ENCODE measurements at regions of chr2 and their contacts with region 1.

Region 1: GRCh38 chr2:66434679-66435548 is at the start of gene MEIS1:
- DNase-seq: peak in 1 of 2 donors; percentile 99
- H3K4me3 ChIP-seq: peak within 1 kb of the TSS; percentile 72 to 77
- H3K27ac ChIP-seq: peak within 1 kb of the TSS; percentile 98
- H3K4me1 ChIP-seq: peaks cover 6% of the 10 kb centered on the region
- H3K27me3 ChIP-seq: no peaks in the 10 kb centered on the region
- CTCF ChIP-seq: peak in 1 of 3 experiments; percentile 15
- POLR2A ChIP-seq: peak in 1 of 2 donors; percentile 96
- total RNA-seq, gene MEIS1: 80.5 TPM

Region 2: GRCh38 chr2:65722028-65722778 is 712.7 kb before region 1 on chr2:
- intact Hi-C with region 1: no loop called
- DNase-seq: no peak
- H3K4me3 ChIP-seq: no peak overlapping the region
- H3K27ac ChIP-seq: no peak overlapping the region
- H3K4me1 ChIP-seq: no peaks in the 10 kb centered on the region
- H3K27me3 ChIP-seq: no peaks in the 10 kb centered on the region
- CTCF ChIP-seq: peak in 1 of 3 experiments; percentile 25
- POLR2A ChIP-seq: no peak

Region 3: DNA sequence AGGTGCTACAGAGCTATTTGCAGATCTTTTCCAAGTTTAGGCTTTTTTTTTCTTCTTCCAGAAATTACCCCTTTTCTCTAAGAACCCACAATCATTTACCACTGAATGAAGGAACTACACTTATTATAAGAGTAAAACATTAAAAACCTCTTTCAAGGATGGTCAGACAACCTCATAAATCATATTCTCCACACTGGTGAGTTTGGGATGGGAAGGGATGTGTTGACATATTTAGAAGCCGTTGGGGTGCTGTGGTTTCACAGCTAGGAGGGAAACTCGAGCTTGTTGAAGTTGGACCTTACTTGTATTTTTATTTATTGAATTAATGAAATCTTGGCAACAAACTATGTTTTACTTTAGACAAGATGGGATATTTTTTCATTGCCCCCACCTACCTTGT is 289.4 kb before region 1 on chr2:
- intact Hi-C with region 1: no loop called
- DNase-seq: no peak
- H3K4me3 ChIP-seq: no peak overlapping the region
- H3K27ac ChIP-seq: no peak overlapping the region
- H3K4me1 ChIP-seq: no peaks in the 10 kb centered on the region
- H3K27me3 ChIP-seq: no peaks in the 10 kb centered on the region
- CTCF ChIP-seq: no peak
- POLR2A ChIP-seq: no peak

Region 4: GRCh38 chr2:66693076-66693965 is 258.4 kb after region 1 on chr2:
- intact Hi-C with region 1: loop called (anchors 2 kb)
- DNase-seq: no peak
- H3K4me3 ChIP-seq: peak overlapping the region; percentile 30 to 43
- H3K27ac ChIP-seq: peak overlapping the region; percentile 68
- H3K4me1 ChIP-seq: no peaks in the 10 kb centered on the region
- H3K27me3 ChIP-seq: no peaks in the 10 kb centered on the region
- CTCF ChIP-seq: no peak
- POLR2A ChIP-seq: no peak

Region 5: DNA sequence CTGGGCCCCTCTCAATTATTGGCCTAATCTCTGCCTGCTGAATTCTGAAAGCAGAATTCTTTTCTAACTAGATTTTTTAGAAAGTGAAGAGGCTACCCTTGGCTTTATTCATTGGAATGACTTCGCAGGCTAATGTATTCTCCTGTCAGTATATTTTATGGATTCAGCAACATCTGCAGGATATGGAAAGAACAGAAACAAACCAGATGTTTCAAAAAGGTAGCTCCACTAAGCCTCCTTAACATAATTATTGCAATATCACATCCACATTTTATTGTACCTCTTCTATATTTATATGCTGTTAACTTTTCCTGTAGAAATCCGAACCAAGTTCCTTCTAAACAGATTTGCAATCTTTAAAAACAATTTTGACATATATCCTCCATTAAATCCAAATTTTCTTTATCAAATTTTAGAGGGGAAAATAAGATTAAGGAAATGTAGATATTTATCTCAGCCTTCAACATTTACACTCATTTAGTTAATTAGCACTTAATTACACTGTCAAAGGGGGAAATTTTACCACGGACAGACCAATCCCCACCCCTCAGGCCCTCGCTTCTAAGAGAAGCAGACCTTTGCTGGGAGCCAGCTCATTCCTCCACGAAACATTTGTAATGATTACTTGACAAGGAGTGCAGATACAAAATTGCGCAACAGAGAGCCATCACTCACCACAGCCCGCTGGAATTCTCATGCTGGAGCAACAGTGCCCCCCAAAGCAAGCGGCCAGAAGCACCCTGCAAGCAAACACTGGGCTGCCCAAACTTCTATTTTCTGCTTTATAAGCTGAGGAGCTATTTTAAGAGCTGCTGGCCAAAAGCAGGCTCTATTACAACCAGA is 1215.6 kb after region 1 on chr2:
- intact Hi-C with region 1: loop called (anchors 5 kb)
- DNase-seq: peak in 1 of 2 donors; percentile 96
- H3K4me3 ChIP-seq: no peak overlapping the region
- H3K27ac ChIP-seq: peak overlapping the region; percentile 70
- H3K4me1 ChIP-seq: peaks cover 22% of the 10 kb centered on the region
- H3K27me3 ChIP-seq: no peaks in the 10 kb centered on the region
- CTCF ChIP-seq: peak in 2 of 3 experiments; percentile 59 to 71
- POLR2A ChIP-seq: no peak

Region 6: DNA sequence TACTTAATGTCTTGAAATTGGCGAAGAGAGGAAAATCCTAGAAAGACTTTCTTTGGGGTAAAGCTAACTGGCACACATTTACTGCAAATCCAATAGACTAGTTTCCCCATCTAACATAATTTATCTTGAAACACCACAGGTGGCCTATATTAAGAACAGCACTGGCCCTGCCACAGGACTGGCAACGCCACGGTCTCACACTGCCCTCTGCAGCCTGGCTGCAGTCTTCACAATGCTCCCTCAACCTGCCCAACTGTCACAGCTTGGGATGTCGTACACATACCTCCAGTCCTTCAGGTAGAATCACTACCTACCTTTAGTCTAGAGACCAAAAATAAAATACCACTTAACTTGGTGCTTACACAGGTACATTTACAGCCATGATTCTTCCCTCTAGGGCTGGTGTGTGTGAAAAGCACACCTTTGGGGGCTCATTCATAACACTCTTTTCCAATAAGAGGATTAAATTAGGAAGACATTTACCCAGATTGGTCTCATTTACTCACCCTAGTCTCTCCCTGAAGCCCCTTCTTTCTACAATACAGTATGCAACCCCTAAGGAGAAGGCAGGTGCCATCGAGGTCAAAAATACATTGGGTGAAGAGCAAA is 1405.7 kb after region 1 on chr2:
- intact Hi-C with region 1: loop called (anchors 5 kb)
- DNase-seq: no peak
- H3K4me3 ChIP-seq: no peak overlapping the region
- H3K27ac ChIP-seq: no peak overlapping the region
- H3K4me1 ChIP-seq: no peaks in the 10 kb centered on the region
- H3K27me3 ChIP-seq: no peaks in the 10 kb centered on the region
- CTCF ChIP-seq: peak; percentile 49 to 77 (median 62)
- POLR2A ChIP-seq: no peak

Measured in vagina (tissue), 2 donors.